Right ventricle myocardium superior (tissue), 1 donor: ENCODE measurements at regions of chr7 and their contacts with region 1.

Region 1: GRCh38 chr7:155815332-155816191 is 3.3 kb upstream of the SHH start:
- DNase-seq: no peak
- ATAC-seq: peak; percentile 79

Region 2: DNA sequence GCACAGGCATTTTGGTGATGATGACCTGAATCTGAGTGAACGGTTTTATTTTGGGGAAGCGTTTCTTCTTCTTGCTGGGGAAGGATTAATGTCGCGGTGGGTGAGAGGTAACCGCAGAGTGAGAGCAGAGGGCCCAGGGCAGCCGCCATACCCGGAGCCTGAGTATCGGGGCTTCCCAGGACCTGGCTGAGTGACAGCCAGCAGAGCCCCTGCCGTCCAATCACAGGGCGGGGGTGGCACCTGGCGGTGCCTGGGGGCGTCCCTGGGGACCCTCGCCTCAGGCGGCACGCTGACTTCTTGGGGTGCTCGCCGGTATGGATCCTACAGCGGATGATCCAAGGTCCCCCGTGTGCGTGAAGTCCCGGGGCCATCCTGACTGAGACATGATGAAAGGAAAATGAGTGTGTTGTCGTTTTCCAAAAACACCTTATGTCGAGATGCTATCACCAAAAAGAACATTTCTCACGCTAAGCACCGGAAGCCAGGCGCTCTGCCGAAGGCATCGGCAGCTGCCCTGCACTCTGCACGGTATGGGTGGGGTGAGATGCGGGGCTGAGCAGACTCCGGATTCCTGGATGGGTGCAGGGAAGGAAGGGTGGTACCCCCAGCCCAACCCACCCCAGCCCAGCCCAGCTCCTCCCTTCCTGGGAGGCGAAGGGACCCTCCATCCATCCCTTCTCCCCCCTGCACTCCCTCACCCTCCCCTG is 224.6 kb after region 1 on chr7:
- intact Hi-C with region 1: no loop called
- DNase-seq: no peak
- ATAC-seq: no peak

Region 3: DNA sequence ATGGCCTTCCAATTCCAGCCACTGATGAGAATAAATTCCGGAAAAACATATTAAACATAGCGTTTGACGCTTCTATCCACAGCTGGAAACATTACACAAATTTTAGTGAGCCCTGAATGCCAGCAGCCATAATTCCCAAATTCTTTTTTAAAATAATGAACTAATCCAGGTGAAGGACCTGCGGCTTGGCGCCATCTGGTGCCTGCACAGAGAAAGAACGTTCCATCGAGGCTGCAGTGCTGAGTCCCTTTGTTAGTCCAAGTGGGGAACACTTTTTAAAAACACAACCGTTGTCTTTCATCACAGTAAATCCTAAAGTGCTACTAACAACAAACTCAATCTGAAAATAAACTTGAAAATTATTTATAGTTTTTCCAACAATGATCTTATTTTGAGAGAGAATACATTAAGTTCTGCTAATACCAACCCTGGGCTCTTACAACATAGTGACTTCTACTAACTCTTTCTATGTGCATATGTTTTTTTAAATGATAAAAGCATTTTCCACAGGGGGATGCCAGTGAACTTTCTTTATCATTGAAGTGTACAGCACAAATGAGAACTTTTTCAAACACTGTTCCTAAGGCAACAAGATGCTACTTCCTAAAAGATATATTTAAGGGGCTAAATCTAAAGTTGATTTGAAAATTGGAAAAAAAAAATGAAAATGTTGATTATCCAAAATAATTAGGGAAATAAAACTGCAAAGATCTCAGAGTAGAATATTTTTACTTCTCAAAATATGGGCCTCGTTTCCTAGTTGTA is 658.1 kb after region 1 on chr7:
- intact Hi-C with region 1: loop called (anchors 5 kb)
- DNase-seq: no peak
- ATAC-seq: no peak